Heart left ventricle (tissue), 16 donors: ENCODE measurements at regions of chr10 and their contacts with region 1.

Region 1: DNA sequence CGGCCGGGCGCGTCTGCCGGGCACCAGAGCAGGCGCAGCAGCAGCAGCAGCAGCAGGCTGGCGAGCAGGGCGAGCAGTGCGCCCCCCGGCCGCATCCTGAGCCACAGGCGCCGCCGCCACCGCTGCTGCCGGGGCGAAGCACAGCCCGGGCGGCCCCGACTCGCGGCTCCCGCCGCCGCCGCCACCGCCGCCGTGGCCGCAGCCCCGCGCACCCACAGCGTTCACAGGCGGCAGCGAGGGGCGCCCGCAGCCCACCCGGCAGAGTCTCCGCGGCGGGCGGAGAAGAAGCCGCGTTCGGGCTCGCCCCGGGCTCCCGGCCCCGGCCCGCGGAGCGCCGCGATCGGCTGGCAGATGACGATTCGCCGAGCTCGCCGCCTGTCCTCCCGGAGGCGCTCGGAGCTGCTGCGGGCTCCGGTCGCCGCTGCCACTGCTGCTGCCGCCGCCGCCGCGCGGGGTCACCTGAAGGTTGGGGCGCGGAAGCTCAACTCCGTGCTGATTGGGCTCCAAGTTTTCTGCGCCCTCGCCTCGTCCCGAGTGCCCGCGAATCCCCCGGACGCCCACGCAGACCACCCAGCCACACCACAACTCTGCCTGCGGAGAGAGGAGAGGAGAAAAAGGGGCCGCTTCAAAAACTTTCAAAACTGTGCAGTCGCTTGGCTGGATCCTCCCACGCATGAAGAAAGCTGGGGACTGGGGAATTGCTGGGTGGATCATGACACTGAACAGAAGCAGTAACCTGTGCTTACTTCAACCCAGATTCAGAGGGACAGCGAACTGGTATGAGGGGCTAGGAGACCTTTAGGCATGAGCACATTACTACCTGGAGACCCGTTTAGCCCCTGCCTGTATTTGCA is at the start of gene ST8SIA6:
- DNase-seq: peak; percentile 42 to 76 (median 50)
- ATAC-seq: peak in 3 of 4 donors; percentile 72 to 84 (median 80)
- H3K4me3 ChIP-seq: peak within 1 kb of the TSS; percentile 51 to 81 (median 61)
- H3K27ac ChIP-seq: peak within 1 kb of the TSS; percentile 57 to 87 (median 78)
- H3K4me1 ChIP-seq: peaks cover 0 to 16% (median 0%) of the 10 kb centered on the region in 12 donors
- H3K27me3 ChIP-seq: peaks cover 0 to 25% (median 10%) of the 10 kb centered on the region in 9 donors
- CTCF ChIP-seq: peak in 2 of 12 donors; percentile 20 to 23
- POLR2A ChIP-seq: peak in 1 of 2 donors; percentile 37
- total RNA-seq, gene ST8SIA6: 2.6 to 10.1 (median 5.2) TPM

Region 2: DNA sequence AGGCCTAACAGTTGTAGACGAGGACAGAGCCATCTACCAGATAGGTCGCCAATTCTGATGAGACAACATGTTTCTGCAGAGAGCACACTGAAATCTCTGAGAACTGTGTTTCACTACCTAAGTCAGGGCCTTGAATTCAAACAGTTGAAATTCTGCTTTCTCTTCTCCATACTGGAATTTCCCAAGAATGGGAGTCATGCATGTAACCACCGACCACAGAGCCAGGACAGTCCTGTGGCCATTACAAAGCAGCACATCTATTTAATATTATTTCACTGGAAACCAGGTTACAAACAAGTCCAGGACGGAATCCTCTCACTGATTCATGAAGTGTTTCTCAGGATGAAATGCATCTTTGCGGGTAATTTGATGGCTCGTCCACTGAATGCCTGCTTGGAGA is 62.0 kb after region 1 on chr10:
- intact Hi-C with region 1: no loop called
- DNase-seq: no peak
- ATAC-seq: no peak
- H3K4me3 ChIP-seq: no peak overlapping the region
- H3K27ac ChIP-seq: no peak overlapping the region
- H3K4me1 ChIP-seq: peaks cover 0 to 13% (median 0%) of the 10 kb centered on the region in 12 donors
- H3K27me3 ChIP-seq: no peaks in the 10 kb centered on the region
- CTCF ChIP-seq: no peak
- POLR2A ChIP-seq: no peak

Region 3: DNA sequence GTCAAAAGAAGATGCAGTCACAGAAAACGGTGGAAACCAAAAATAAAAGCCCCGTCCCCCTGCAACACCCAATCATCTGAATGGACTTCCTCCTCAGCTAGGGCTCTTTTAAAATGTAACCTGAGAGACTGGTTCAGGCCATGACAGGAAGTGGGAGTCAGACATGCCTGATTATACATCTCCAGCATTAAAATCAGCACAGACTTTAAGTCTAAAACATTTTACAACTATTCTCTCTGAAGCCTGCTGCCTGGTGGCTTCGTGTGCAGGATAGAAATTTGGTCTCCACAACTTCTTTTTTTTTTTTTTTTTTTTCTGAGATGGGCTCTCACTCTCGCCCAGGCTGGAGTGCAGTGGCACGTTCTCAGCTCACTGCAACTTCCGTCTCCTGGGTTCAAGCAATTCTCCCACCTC is 132.4 kb after region 1 on chr10:
- intact Hi-C with region 1: loop called in 1 of 10 experiments (anchors 10 kb)
- DNase-seq: no peak
- ATAC-seq: peak in 3 of 4 donors; percentile 5 to 43 (median 35)
- H3K4me3 ChIP-seq: no peak overlapping the region
- H3K27ac ChIP-seq: no peak overlapping the region
- H3K4me1 ChIP-seq: peaks cover 0 to 13% (median 2%) of the 10 kb centered on the region in 12 donors
- H3K27me3 ChIP-seq: no peaks in the 10 kb centered on the region
- CTCF ChIP-seq: no peak
- POLR2A ChIP-seq: no peak

Region 4: DNA sequence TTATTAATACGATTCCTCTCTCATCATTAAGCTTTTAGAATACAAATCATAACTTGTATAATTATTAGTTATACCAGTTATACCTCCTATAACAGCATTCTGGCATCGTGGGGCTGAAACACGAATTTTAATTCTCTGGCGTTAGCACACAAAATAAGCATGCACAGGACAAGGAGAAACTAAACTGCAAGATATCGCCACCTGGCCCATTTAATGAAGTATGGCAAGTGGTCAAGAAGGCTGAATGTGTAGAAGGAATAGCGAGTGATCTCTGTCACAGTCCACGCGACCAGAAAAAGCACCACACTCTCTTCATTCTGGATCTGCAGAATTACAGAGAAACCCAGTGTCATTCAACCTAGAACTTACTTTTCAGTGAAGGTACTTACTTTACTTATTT is 144.7 kb after region 1 on chr10:
- intact Hi-C with region 1: loop called in 1 of 10 experiments (anchors 5 kb)
- DNase-seq: no peak
- ATAC-seq: peak in 2 of 4 donors; percentile 53 to 57
- H3K4me3 ChIP-seq: no peak overlapping the region
- H3K27ac ChIP-seq: no peak overlapping the region
- H3K4me1 ChIP-seq: peaks cover 0 to 6% (median 0%) of the 10 kb centered on the region in 12 donors
- H3K27me3 ChIP-seq: no peaks in the 10 kb centered on the region
- CTCF ChIP-seq: peak in 10 of 12 donors; percentile 13 to 51 (median 36)
- POLR2A ChIP-seq: no peak